Mammary epithelial cell (primary cell): ENCODE measurements at regions of chr1 and their contacts with region 1.

Region 1: GRCh38 chr1:64469977-64470664 is at the start of gene CACHD1:
- DNase-seq: peak; percentile 80
- H3K4me3 ChIP-seq: peak within 1 kb of the TSS; percentile 43 to 76 (median 64)
- H3K27ac ChIP-seq: peak within 1 kb of the TSS; percentile 38
- H3K4me1 ChIP-seq: peaks cover 14% of the 10 kb centered on the region
- H3K27me3 ChIP-seq: no peaks in the 10 kb centered on the region
- CTCF ChIP-seq: peak in 1 of 2 donors; percentile 49
- total RNA-seq, gene CACHD1: 4.6 to 12.0 TPM

Region 2: DNA sequence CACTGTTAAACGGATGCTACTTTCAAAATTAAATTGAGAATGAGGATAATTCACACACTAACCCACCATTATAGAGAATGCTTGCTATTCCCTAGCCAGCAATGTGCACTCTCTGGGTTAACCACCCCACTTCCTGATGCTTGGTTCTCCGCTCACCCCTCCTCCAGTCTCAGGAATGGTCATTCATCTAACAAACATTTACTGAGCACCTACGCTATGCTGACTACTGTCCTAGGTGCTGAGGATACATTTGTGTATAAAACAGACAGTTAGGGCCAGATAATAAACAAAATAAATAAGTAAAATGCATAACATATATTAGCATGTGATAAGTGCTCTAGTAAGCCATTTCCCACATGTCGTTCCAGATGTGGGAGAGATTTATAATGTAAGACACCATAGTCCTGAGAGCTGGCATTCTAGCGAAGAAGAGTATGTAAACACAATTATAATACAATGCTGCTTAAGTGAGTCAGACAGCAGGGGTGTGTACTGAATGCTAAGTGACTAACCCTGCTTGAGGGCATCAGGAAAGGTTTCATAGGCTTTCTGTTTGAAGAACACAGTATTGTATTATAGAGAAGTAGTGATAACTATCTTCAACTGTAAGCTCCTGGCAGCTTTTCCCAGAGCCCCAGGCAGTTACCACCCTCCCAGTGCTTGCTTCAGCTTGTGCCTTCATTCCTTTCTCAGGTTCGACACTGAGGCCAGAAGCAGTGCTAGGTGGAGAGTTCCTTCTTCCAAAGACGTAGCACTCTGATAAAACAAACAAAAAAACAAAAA is 126.8 kb before region 1 on chr1:
- CTCF ChIA-PET with region 1: no interaction called
- dilution Hi-C with region 1: no loop called
- in situ Hi-C with region 1: no loop called
- intact Hi-C with region 1: loop called (anchors 1 kb)
- DNase-seq: peak; percentile 99
- H3K4me3 ChIP-seq: peak overlapping the region in 2 of 3 experiments; percentile 13 to 36
- H3K27ac ChIP-seq: peak overlapping the region; percentile 97
- H3K4me1 ChIP-seq: peaks cover 32% of the 10 kb centered on the region
- H3K27me3 ChIP-seq: no peaks in the 10 kb centered on the region
- CTCF ChIP-seq: no peak

Region 3: GRCh38 chr1:64505232-64505943 is 35.3 kb after region 1 on chr1:
- CTCF ChIA-PET with region 1: no interaction called
- dilution Hi-C with region 1: no loop called
- in situ Hi-C with region 1: no loop called
- intact Hi-C with region 1: loop called (anchors 5 kb)
- DNase-seq: no peak
- H3K4me3 ChIP-seq: peak overlapping the region in 2 of 3 experiments; percentile 33 to 44
- H3K27ac ChIP-seq: no peak overlapping the region
- H3K4me1 ChIP-seq: peaks cover 5% of the 10 kb centered on the region
- H3K27me3 ChIP-seq: no peaks in the 10 kb centered on the region
- CTCF ChIP-seq: no peak

Region 4: GRCh38 chr1:64584479-64584878 is 114.4 kb after region 1 on chr1:
- CTCF ChIA-PET with region 1: no interaction called
- dilution Hi-C with region 1: no loop called
- in situ Hi-C with region 1: no loop called
- intact Hi-C with region 1: loop called (anchors 2 kb)
- DNase-seq: no peak
- H3K4me3 ChIP-seq: no peak overlapping the region
- H3K27ac ChIP-seq: no peak overlapping the region
- H3K4me1 ChIP-seq: no peaks in the 10 kb centered on the region
- H3K27me3 ChIP-seq: no peaks in the 10 kb centered on the region
- CTCF ChIP-seq: peak; percentile 53 to 75

Region 5: DNA sequence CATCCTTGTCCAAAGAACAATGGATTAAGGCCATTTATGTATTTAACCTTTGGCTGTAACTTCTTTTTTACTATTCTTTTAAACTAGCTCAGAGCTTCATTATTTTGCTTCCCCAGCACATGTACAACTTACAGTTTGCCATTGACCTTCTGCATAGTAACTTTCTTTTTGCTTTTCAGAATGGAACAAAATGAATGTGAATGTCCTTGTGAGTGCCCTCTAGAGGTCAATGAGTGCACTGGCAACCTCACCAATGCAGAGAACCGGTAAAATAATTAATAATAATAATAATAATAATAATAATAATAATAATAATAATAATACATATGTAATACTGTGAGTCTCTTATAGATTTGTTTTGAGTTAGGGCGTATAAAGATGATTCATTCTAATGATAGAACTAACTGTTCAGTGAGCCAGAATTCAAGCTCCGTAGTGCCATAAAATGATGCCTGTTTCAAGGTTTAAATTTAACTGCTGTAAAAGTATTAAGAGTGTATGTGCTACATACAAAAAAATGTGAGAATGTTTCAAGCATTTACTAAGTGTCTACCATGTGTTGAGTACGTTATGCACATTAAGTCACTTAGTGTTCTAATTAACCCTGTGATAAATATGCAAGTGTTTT is 205.7 kb after region 1 on chr1:
- CTCF ChIA-PET with region 1: no interaction called
- dilution Hi-C with region 1: no loop called
- in situ Hi-C with region 1: no loop called
- intact Hi-C with region 1: loop called (anchors 5 kb)
- DNase-seq: no peak
- H3K4me3 ChIP-seq: no peak overlapping the region
- H3K27ac ChIP-seq: no peak overlapping the region
- H3K4me1 ChIP-seq: no peaks in the 10 kb centered on the region
- H3K27me3 ChIP-seq: no peaks in the 10 kb centered on the region
- CTCF ChIP-seq: peak; percentile 56 to 71

Region 6: DNA sequence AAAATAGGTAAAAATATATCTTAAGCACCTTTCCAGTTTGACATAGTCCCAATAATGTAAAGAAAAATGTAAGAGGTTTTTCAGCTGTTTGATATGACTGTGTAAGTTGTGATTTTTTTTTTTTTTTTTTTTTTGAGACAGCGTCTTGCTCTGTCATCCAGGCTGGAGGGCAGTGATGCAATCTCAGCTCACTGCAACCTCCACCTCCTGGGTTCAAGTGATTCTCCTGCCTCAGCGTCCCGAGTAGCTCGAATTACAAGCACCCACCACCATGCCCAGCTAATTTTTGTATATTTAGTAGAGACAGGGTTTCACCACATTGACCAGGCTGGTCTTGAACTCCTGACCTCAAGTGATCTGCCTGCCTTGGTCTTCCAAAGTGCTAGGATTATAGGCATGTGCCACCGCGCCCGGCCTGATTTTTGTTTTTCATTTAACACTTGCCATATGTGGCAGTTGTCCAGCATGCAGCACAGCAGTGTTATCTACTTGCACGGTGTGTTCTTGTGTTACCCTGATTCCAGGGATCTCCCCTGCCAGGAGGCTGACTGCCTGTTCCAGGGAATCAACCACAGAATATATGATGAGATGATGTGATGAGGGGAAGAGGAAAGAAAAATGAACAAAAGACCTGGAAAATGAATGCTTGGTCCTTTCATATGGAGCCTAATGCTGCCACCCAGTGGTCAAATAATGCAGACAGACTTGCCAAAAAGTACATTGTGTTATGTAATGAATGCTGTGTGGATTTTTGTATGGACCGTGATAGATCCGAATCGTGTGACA is 353.8 kb after region 1 on chr1:
- CTCF ChIA-PET with region 1: no interaction called
- dilution Hi-C with region 1: no loop called
- in situ Hi-C with region 1: no loop called
- intact Hi-C with region 1: loop called (anchors 1 kb)
- DNase-seq: peak; percentile 59
- H3K4me3 ChIP-seq: no peak overlapping the region
- H3K27ac ChIP-seq: no peak overlapping the region
- H3K4me1 ChIP-seq: no peaks in the 10 kb centered on the region
- H3K27me3 ChIP-seq: no peaks in the 10 kb centered on the region
- CTCF ChIP-seq: peak; percentile 66 to 83